ENCODE measurements at regions of chr20 and their contacts with region 1.

Region 1: GRCh38 chr20:3407771-3408637 is 535 bp upstream of the DNAAF9 start:
- DNase-seq: peak; percentile 84
- H3K4me3 Mint-ChIP-seq: peak overlapping the region; percentile 90
- H3K27ac Mint-ChIP-seq: peak overlapping the region; percentile 75
- H3K4me1 Mint-ChIP-seq: peaks cover 22% of the 10 kb centered on the region
- H3K27me3 Mint-ChIP-seq: no peaks in the 10 kb centered on the region
- CTCF ChIP-seq: no peak

Region 2: DNA sequence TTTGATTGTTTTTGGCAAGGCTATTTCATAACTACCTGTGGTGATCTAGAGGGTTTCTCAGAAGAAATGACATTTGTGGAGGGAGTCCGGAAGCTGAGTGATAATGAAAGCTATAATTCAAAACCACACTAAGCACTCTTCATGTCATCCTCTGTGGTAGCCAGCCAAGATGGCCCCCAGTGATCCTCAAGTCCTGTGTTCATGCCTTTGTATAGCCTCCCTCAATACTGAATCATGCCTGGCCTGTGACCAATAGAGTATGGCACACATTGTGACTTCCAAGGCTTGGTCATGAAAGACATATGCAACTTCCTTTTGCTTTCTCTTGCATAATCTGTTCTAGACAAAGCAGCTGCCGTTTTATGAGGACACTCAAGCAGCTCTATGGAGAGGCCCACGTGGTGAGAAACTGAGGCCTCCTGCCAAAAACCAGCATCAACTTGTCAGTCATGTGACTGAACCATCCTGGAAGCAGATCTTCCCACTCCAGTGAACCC is 12.3 kb after region 1 on chr20:
- CTCF ChIA-PET with region 1: interaction called, 5 read pairs
- POLR2A ChIA-PET with region 1: interaction called, 141 read pairs
- intact Hi-C with region 1: no loop called
- DNase-seq: peak; percentile 94
- H3K4me3 Mint-ChIP-seq: no peak overlapping the region
- H3K27ac Mint-ChIP-seq: peak overlapping the region; percentile 57
- H3K4me1 Mint-ChIP-seq: peaks cover 8% of the 10 kb centered on the region
- H3K27me3 Mint-ChIP-seq: no peaks in the 10 kb centered on the region
- CTCF ChIP-seq: no peak

Region 3: DNA sequence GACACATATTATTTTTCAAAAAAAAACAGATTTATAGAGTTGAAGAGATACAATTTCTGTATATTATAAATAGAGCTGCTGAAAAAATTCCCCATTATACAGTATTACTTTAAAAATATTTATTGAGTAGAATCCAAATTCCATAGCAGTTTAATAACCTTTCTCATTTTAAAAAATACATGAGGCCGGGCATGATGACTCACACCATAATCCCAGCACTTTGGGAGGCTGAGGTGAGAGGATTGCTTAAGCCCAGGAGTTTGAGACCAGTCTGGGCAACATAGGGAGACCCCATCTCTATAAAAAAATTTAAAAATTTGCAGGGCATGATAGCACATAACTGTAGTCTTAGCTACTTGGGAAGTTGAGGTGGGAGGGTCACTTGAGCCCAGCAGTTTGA is 75.8 kb after region 1 on chr20:
- CTCF ChIA-PET with region 1: interaction called, 13 read pairs
- POLR2A ChIA-PET with region 1: interaction called, 17 read pairs
- intact Hi-C with region 1: no loop called
- DNase-seq: peak; percentile 27
- H3K4me3 Mint-ChIP-seq: no peak overlapping the region
- H3K27ac Mint-ChIP-seq: peak overlapping the region; percentile 40
- H3K4me1 Mint-ChIP-seq: peaks cover 6% of the 10 kb centered on the region
- H3K27me3 Mint-ChIP-seq: no peaks in the 10 kb centered on the region
- CTCF ChIP-seq: no peak

Region 4: DNA sequence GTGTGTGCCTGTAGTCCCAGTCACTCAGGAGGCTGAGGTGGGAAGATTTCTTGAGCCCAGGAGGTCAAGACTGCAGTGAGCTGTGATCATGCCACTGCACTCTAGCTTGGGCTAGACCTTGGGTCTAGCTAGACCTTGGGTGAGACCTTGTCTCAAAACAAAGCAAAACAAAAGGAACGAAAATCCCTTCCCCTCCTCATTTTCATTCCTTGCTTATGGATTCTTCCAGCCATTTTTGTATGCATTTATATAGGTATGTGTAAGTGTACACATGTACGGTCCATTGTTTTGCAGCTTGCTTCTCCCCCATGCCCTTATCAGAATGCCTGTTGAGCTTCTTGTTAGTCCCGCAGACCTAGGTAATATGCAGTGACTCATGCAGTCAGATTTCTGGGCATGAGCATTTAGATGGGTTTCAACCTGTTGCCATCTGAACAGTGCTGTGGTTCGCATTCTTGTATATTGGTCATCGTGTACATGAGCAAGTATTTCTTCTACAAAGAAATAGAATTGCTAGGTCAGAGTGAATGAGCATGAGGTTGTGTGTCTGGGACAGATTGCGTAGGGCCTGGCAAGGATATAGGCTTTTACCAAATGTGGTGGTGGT is 136.0 kb after region 1 on chr20:
- CTCF ChIA-PET with region 1: interaction called, 3 read pairs
- POLR2A ChIA-PET with region 1: interaction called, 17 read pairs
- intact Hi-C with region 1: no loop called
- DNase-seq: peak; percentile 89
- H3K4me3 Mint-ChIP-seq: no peak overlapping the region
- H3K27ac Mint-ChIP-seq: peak overlapping the region; percentile 65
- H3K4me1 Mint-ChIP-seq: peaks cover 16% of the 10 kb centered on the region
- H3K27me3 Mint-ChIP-seq: no peaks in the 10 kb centered on the region
- CTCF ChIP-seq: no peak

Measured in MCF 10A (cell line).